Body of pancreas (tissue), 4 donors: ENCODE measurements at regions of chr10 and their contacts with region 1.

Region 1: GRCh38 chr10:689433-690371 is at the start of gene DIP2C:
- DNase-seq: peak; percentile 66 to 83 (median 75)
- ATAC-seq: peak; percentile 86
- H3K4me3 ChIP-seq: peak within 1 kb of the TSS; percentile 38 to 67
- H3K27ac ChIP-seq: peak within 1 kb of the TSS; percentile 58 to 86 (median 77)
- H3K4me1 ChIP-seq: peaks cover 19% of the 10 kb centered on the region
- H3K27me3 ChIP-seq: no peaks in the 10 kb centered on the region
- CTCF ChIP-seq: no peak
- POLR2A ChIP-seq: peak in 2 of 3 donors; percentile 32 to 33
- total RNA-seq, gene DIP2C: 9.6 to 11.9 TPM

Region 2: DNA sequence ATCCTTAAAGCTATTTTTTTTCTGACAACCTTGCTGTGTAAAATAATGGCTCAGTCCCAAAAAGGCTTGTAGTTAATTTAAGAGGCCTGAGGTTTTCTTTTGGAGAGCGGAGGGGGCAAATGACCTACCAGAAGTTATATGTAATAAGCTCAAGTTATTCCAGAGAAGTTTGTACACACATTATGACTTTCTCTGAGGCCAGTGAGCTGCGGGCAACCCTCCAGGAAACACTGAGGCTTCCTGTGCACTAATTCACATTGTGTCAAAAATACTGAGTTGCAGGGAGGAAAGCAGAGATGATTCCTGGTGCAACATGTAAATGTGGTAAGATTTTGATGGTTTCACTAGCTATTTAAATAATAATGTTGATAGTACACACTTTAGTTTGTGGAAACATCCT is 188.8 kb before region 1 on chr10:
- intact Hi-C with region 1: loop called (anchors 10 kb)
- DNase-seq: no peak
- ATAC-seq: no peak
- H3K4me3 ChIP-seq: no peak overlapping the region
- H3K27ac ChIP-seq: no peak overlapping the region
- H3K4me1 ChIP-seq: no peaks in the 10 kb centered on the region
- H3K27me3 ChIP-seq: no peaks in the 10 kb centered on the region
- CTCF ChIP-seq: no peak
- POLR2A ChIP-seq: no peak